Cardiac septum (tissue), 1 donor: ENCODE measurements at regions of chr7 and their contacts with region 1.

Region 1: GRCh38 chr7:150631866-150632864 is at the start of gene GIMAP6:
- DNase-seq: peak; percentile 80
- total RNA-seq, gene GIMAP6: 16.6 TPM

Region 2: DNA sequence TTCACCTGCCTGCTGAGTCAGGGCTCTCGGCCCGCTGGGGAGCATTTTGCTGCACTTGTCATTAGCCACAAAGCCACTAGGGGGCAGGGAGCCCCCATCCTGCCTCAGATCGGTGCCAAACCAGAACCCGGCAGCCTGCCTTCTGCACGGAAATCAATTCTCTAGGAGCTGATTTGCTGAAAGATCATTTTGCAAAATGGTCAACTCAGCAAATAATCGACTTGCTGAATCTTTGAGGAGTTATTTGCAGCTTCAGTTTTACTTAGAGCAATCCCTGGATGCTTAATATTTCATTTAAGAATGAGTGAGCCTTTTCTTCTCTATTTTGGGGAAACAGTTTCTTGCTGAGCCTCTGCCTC is 183.4 kb before region 1 on chr7:
- intact Hi-C with region 1: loop called (anchors 5 kb)
- DNase-seq: peak; percentile 94

Region 3: GRCh38 chr7:150586785-150587152 is 45.4 kb before region 1 on chr7:
- intact Hi-C with region 1: loop called (anchors 2 kb)
- DNase-seq: no peak

Region 4: DNA sequence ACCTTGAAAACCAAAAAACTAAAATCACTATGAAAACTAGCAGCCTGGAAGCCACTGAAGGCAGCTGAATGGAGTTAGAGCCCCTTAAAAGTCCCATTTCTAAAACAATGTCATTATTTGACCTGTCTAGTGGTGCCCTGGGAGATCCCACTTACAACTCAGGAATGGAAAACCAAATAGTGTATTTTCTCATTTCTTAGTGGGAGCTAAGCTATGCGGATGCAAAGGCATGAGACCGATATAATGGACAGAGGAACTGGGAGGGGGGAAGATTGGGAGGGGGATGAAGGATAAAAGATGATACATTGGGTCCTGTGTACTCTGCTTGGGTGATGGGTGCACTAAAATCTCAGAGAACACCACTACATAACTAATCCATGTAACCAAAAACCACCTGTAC is 43.5 kb after region 1 on chr7:
- intact Hi-C with region 1: loop called (anchors 5 kb)
- DNase-seq: no peak

Region 5: DNA sequence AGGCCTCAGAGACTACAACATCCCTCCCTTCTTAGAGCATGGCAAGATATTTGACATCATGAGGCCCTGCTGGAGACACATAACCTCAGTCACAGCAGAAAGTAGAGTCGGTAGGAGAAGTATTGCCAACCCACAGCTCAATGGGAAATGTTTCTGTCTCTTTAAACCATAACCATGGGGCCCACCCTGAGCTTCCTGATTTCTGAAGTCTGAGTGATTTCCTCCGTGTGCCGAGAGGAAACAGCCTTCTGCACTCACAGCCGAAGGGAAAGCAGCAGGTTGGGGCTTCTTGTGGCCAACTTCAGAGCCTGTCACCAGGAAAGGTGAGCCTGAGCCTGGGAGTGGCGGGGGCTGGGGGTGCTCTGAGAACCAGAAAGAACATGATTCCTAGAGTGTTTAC is 84.2 kb after region 1 on chr7 and contains the start of gene GIMAP1:
- intact Hi-C with region 1: loop called (anchors 2 kb)
- DNase-seq: peak; percentile 79
- total RNA-seq, gene GIMAP1: 3.5 TPM

Region 6: GRCh38 chr7:150737265-150738055 is 105.3 kb after region 1 on chr7 and contains the start of gene GIMAP5:
- intact Hi-C with region 1: loop called (anchors 5 kb)
- DNase-seq: no peak
- total RNA-seq, gene GIMAP5: 6.6 TPM

Region 7: GRCh38 chr7:150753826-150754603 is 121.8 kb after region 1 on chr7:
- intact Hi-C with region 1: loop called (anchors 2 kb)
- DNase-seq: no peak

Region 8: GRCh38 chr7:150852371-150852920 is 220.3 kb after region 1 on chr7 and contains the start of gene AOC1:
- intact Hi-C with region 1: no loop called
- DNase-seq: no peak
- total RNA-seq, gene AOC1: 0.43 TPM